ENCODE measurements at regions of chr22 and their contacts with region 1.

Region 1: GRCh38 chr22:46122511-46122971 is 27.8 kb upstream of the PPARA start:
- DNase-seq: peak; percentile 93
- CTCF ChIP-seq: peak; percentile 90

Region 2: DNA sequence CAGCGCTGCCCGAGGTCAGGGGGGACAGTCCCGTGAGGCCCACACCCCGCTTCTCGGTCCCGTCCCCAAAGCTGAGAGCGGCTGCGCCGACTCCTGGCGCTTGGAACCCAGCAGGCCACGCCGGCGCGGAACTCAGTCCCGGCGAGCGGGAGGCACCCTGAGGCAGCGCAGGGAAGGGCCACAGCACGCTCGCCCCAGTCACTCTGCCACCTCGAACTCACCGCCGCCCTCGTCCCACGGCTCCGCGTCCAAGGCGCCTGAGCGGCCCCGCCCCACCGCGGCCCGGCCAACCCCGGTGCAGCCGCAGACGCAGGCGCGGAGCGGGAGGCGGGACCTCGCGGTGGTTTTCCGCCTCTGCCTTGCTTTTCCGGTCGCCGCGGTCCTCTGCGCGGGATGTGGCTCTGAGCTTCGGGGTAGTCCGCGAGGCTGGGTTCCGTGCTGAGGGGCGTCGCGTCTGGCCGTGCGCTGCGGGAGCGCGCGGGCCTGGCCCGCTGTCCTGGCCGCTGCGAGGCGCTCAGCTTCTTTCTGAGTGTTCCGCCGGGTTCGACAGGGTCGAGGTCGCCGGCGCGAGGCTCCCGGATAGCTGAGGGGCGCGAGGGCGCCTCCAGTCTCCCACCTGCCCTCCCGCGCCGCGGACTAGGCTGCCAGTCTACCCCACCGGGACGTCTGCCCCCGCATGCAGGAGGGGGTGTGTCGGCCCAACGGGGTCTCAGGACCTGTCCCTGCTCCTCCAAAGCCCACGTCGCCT is 127.7 kb after region 1 on chr22 and contains the start of gene CDPF1:
- in situ Hi-C with region 1: no loop called
- DNase-seq: peak; percentile 96
- CTCF ChIP-seq: peak; percentile 24

Region 3: GRCh38 chr22:46309526-46310085 is 187.1 kb after region 1 on chr22:
- in situ Hi-C with region 1: loop called (anchors 10 kb)
- DNase-seq: no peak
- CTCF ChIP-seq: no peak

Measured in GM13977 (cell line).